ENCODE measurements at regions of chr11 and their contacts with region 1.

Region 1: DNA sequence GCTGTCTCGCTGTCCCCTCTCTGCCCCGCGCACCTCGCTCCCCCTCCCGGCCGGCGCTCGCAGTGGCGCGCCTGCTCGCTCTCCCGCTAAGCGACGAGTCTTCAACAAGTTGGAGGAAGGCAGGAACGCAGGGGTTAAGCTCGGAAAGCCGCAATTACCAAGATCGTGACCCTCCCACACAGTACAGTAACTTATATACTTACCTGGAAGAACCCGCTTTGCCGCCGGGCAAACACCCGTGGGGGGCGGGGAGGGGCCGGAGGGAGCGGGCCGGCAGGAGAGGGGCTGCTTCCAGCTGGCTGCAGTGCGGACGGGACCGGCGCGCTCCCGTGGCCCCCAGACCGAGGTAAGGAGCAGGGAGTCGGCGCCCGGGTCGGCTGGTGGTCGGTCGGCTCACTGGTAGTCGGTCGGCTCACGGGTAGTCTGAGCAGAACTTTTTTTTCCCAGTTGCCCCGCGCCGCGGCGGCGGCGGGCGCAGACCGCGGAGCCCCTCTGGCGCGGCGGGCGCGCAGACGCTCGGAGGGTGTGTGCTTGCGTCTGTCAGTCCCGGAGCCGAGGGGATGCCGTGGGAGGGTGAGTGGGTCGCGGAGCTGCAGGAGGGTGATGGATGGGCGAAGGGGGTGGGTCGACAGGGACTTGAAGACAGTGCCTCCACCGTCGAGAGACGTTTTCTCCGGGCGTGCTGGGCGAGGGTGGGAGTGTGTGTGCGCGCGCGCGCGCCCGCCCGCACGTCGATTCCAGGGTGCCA is 101.2 kb upstream of the HSD17B12 start:
- DNase-seq: no peak
- H3K4me3 Mint-ChIP-seq: peak overlapping the region; percentile 68
- H3K27ac Mint-ChIP-seq: no peak overlapping the region
- H3K4me1 Mint-ChIP-seq: peaks cover 32% of the 10 kb centered on the region
- H3K27me3 Mint-ChIP-seq: peaks cover 91% of the 10 kb centered on the region

Region 2: GRCh38 chr11:43486141-43486540 is 93.2 kb before region 1 on chr11:
- intact Hi-C with region 1: no loop called
- DNase-seq: no peak
- H3K4me3 Mint-ChIP-seq: no peak overlapping the region
- H3K27ac Mint-ChIP-seq: no peak overlapping the region
- H3K4me1 Mint-ChIP-seq: peaks cover 1% of the 10 kb centered on the region
- H3K27me3 Mint-ChIP-seq: no peaks in the 10 kb centered on the region

Region 3: DNA sequence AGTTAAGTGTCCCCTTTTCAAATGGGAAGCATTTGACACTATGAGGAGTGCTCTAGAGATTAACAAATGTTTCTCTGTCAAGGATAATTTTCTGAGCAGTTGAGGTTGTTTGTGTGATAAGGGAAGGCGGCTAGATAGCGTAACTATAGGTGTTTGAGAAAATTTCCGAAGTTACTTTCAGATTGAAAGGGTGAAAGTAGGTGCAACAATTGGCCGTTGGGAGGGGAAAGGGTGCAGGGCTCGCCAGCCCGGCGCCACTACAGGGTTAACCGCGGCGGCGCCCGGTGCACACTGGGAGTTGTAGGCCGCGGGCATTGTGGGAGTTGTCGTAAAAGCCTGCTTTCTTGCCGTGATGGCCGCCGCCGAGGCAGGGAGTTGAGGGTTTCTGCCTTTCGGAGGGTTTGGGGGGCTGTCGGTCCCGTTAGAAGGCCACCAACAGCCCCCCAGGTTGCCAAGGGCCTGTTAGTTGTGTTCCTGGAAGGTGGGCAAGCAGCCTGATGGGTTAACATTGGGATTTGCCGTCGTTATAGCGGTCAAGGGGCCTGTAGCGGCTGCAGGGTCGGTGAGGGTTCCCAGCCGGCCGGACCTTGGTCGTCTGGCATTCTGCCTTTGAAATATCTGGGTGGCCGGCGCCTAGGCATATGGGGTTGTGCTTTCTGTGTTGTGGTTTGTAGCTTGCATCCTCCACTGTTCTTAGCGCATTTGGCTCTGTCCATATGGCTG is 64.7 kb after region 1 on chr11:
- intact Hi-C with region 1: loop called (anchors 1 kb)
- DNase-seq: peak; percentile 84
- H3K4me3 Mint-ChIP-seq: peak overlapping the region; percentile 96
- H3K27ac Mint-ChIP-seq: peak overlapping the region; percentile 87
- H3K4me1 Mint-ChIP-seq: peaks cover 19% of the 10 kb centered on the region
- H3K27me3 Mint-ChIP-seq: peaks cover 15% of the 10 kb centered on the region

Region 4: GRCh38 chr11:43680521-43681400 is 101.4 kb after region 1 on chr11 and contains the start of gene HSD17B12:
- intact Hi-C with region 1: loop called (anchors 10 kb)
- DNase-seq: peak; percentile 99
- H3K4me3 Mint-ChIP-seq: peak within 1 kb of the TSS; percentile 96
- H3K27ac Mint-ChIP-seq: peak within 1 kb of the TSS; percentile 96
- H3K4me1 Mint-ChIP-seq: peaks cover 32% of the 10 kb centered on the region
- H3K27me3 Mint-ChIP-seq: peaks cover 2% of the 10 kb centered on the region
- total RNA-seq, gene HSD17B12: 79.8 and 81.3 TPM in 2 replicates

Region 5: DNA sequence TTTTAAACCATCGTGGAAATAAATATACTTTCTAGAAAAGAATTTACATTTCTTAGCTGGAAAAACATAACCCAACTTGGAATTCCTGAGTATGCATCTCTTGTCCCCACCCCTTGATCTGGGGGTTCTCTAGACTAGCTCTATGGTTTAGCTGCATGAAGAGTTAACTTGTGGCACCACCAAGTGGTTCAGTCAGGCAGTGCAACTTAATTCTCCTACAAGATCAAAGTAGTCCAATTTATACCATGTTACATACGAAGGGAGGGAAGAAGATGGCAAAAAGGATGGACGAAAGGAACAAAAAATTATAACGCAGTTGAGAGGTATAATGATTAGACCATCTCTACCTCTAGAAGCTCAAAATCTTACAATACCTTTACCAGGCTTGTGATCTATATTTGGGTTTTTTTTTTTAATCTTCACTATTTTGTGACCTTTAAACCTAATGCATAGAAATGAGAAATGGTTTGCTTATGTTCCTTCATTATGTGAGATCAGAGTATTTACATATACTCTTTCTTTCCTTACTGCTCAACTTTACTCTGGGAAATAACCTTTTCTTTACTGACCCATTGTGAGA is 272.8 kb after region 1 on chr11:
- intact Hi-C with region 1: loop called (anchors 5 kb)
- DNase-seq: peak; percentile 43
- H3K4me3 Mint-ChIP-seq: no peak overlapping the region
- H3K27ac Mint-ChIP-seq: no peak overlapping the region
- H3K4me1 Mint-ChIP-seq: peaks cover 2% of the 10 kb centered on the region
- H3K27me3 Mint-ChIP-seq: no peaks in the 10 kb centered on the region

Region 6: DNA sequence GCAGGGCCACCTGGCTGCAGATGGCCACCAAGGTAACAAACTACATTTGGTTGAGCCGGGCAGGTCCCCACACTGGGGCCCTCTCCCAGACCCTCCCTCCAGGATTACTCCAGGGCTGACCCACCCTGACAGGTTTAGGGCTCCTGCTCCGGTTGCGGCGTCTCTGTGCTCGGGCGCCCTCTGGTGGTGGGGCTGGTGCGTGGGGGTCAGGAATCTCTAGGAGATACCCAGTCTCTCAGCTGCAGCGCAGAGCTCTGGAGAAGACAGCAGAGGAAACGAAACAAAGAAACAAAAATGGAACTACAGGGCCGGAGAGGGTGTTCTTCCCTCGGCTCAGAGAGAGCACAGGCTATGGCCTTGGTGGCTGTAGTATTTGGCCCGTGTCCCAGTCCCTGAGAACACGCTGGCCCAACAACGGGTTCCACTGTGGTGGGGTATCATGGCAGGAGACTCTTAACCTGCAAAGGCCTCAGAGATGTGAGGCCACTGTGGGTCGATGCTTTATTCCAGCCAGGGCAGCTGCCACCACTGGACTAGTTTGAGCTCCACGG is 365.5 kb after region 1 on chr11:
- intact Hi-C with region 1: loop called (anchors 2 kb)
- DNase-seq: peak; percentile 53
- H3K4me3 Mint-ChIP-seq: peak overlapping the region; percentile 89
- H3K27ac Mint-ChIP-seq: no peak overlapping the region
- H3K4me1 Mint-ChIP-seq: peaks cover 13% of the 10 kb centered on the region
- H3K27me3 Mint-ChIP-seq: peaks cover 59% of the 10 kb centered on the region

Region 7: DNA sequence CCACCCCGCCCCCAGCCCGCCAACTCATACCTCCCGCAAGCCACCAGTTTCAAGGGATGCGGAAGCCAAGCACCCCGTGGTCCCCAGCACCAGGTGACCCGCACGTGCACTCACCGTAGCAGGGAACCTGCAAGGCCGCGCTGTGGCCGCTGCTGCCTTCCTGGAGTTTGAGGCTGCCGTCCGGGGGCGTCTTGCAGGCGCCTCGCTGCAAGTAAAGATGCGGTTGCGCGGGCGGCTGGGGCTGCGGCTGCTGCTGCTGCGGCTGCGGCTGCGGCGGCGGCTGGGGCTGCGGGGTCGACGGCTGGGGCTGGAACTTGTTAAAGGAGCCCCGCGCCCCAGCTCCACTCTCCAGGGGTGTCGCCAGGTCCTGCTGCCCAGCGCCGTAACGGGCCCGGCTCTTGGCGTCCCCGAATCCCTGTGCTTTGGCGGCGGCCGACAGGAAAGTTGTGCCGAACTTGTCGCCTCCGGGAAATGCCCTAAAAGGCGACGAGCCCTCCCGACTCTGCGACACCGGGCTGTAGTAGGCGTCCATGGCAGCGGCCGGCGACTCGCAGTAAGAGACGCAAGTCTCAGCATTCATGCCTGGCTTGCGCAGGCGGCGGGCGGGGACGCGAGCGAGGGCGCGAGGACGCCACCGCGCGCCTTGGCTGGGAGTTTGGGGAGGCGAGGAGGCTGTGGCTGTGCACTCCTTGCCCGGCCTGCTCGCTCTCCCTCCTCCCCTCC is 730.3 kb after region 1 on chr11 and contains the start of gene ALX4:
- intact Hi-C with region 1: loop called (anchors 5 kb)
- DNase-seq: no peak
- H3K4me3 Mint-ChIP-seq: peak within 1 kb of the TSS; percentile 56
- H3K27ac Mint-ChIP-seq: peak within 1 kb of the TSS; percentile 63
- H3K4me1 Mint-ChIP-seq: peaks cover 22% of the 10 kb centered on the region
- H3K27me3 Mint-ChIP-seq: peaks cover 88% of the 10 kb centered on the region
- total RNA-seq, gene ALX4: not detected in 2 replicates

Measured in activated T-helper 2 cell treated with anti-CD3 and anti-CD28 coated beads, Interferon-gamma antibody, Interleukin-2, Interleukin-4, amounts not matched to agents 10 μg/mL and 5 μg/mL and 100 μg/mL, durations not matched to agents 14 hours and 24 hours and 36 hours (primary cell).